ENCODE measurements at regions of chr5 and their contacts with region 1.

Region 1: DNA sequence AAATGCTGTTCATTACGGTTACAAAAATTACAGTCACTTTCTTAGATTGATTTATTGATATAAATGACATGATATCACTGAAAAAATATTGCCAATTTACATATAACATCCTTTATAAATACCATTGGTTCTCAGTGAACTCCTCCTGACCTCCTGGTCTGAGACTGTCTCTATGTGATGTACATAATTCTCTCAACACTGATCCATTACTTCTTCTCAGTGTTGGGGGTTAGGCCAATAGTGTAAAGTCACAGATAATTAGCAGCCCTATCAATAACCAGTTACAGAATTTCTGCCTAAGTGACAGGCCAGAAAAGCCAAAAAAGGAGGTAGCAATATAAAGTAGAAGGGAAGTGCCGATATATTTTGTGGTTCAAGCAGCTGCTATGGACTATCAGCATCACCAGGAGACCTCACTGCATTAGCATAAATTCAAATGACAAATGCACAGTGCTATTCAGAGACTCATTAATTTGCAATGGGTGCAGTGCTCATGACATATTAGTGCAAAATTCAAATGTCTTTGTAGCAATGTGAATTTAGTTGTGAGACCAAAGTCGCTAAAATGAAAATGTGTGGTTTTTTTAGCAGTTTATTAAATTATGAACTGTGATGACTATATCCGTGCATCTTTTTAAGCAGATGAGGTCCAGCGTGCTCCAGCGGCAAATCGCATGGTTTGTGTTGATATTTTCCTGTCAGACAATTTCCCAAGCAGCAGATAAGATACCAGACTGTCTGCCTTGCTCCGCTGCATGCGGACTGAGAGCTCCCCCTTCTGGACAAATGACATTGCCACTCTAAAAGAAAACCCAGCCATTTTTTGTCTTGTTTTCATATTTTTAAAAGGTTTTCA is 144.6 kb downstream of the CETN3 start:
- DNase-seq: peak; percentile 34 to 79 (median 61)
- ATAC-seq: peak; percentile 73
- H3K4me3 ChIP-seq: no peak overlapping the region
- H3K4me1 ChIP-seq: no peaks in the 10 kb centered on the region
- CTCF ChIP-seq: peak; percentile 73

Region 2: GRCh38 chr5:90131383-90132133 is 133.4 kb before region 1 on chr5:
- intact Hi-C with region 1: loop called in 1 of 2 experiments (anchors 10 kb)
- DNase-seq: no peak
- ATAC-seq: no peak
- H3K4me3 ChIP-seq: no peak overlapping the region
- H3K4me1 ChIP-seq: no peaks in the 10 kb centered on the region
- CTCF ChIP-seq: no peak

Measured in mucosa of descending colon (tissue), 3 donors.